ENCODE measurements at regions of chr4 and their contacts with region 1.

Region 1: DNA sequence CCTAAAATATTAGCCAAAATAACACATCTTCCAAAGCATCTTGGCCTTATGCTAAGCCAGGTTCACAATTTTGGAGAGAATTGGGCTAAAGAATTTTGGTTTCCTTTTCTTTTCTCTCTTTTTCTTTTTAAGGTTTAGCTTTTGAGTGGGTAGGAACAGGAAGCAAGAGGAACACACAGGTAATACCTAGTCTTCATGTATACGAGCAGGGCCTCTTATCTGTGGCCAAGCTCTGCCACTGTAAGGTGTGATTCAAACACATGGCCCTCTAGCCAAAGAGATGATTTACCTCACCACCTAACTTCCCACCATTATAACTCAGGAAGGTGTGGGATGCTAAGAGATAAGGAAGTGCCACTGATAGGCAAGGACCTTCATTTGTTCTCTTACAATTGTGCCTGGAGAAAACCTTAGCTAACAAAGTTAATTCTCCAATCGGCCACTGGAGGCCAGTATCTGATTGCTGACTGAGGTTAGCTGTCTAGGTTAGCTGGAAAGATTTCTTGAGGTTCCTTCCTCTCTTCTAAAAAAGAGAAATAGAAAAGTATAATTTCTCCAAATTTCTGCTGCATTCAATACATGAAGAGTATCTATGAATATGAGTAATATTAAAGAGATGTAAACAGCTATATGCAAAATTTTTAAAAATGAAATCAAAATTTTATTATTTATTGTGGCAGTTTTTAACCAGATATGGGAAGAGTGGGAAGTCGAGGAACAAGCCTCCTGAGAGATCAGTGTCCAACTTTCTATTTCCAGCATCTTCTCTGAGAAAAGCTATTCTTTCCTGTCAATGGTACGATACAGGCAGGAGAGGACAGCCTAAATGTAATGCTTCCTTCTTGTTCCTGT is 30.1 kb upstream of the BBS7 start:
- DNase-seq: peak; percentile 24
- H3K4me3 Mint-ChIP-seq: no peak overlapping the region
- H3K27ac Mint-ChIP-seq: no peak overlapping the region
- H3K4me1 Mint-ChIP-seq: peaks cover 6% of the 10 kb centered on the region
- H3K27me3 Mint-ChIP-seq: peaks cover 7% of the 10 kb centered on the region

Region 2: DNA sequence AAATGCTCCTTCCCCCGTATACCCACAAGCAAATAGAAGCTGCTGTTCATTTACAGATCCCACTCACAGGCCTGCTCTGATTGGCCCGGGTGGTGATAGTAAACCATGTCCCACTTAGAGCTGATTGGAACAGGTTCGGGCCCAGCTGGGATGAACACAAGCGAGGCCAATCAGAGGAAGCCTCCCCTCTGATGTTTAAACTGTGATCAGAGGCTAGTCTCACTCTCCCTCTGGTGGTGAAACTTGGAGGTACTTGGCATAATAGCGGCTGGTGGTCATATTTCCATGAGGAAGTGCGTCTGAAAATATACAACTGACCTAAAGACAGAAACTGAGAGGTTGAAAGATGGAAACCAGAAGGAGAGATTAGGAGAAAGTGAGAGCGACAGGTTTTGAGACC is 103.0 kb after region 1 on chr4:
- intact Hi-C with region 1: loop called (anchors 1 kb)
- DNase-seq: no peak
- H3K4me3 Mint-ChIP-seq: no peak overlapping the region
- H3K27ac Mint-ChIP-seq: no peak overlapping the region
- H3K4me1 Mint-ChIP-seq: peaks cover 14% of the 10 kb centered on the region
- H3K27me3 Mint-ChIP-seq: peaks cover 5% of the 10 kb centered on the region

Region 3: DNA sequence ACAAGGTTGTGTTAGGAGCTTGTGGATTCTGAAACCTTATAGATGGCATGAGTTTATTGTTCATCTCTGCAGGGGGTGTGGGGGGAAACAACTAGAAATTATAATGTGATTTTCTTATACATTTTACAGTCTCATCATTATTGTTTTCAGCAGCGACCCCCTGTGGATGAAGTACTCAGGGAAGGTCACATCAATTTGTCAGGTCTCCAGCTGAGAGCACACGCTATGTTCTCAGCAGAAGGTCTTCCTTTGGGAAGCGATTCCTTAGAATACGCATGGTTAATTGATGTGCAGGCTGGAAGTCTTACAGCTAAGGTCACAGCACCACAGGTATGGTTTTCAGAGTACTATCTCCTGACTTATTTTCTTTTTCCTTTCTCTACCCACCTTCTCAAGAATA is 324.0 kb after region 1 on chr4:
- intact Hi-C with region 1: loop called (anchors 5 kb)
- DNase-seq: no peak
- H3K4me3 Mint-ChIP-seq: no peak overlapping the region
- H3K27ac Mint-ChIP-seq: no peak overlapping the region
- H3K4me1 Mint-ChIP-seq: no peaks in the 10 kb centered on the region
- H3K27me3 Mint-ChIP-seq: no peaks in the 10 kb centered on the region

Region 4: GRCh38 chr4:122309988-122310626 is 409.7 kb after region 1 on chr4:
- intact Hi-C with region 1: loop called (anchors 5 kb)
- DNase-seq: no peak
- H3K4me3 Mint-ChIP-seq: no peak overlapping the region
- H3K27ac Mint-ChIP-seq: no peak overlapping the region
- H3K4me1 Mint-ChIP-seq: peaks cover 6% of the 10 kb centered on the region
- H3K27me3 Mint-ChIP-seq: no peaks in the 10 kb centered on the region

Region 5: DNA sequence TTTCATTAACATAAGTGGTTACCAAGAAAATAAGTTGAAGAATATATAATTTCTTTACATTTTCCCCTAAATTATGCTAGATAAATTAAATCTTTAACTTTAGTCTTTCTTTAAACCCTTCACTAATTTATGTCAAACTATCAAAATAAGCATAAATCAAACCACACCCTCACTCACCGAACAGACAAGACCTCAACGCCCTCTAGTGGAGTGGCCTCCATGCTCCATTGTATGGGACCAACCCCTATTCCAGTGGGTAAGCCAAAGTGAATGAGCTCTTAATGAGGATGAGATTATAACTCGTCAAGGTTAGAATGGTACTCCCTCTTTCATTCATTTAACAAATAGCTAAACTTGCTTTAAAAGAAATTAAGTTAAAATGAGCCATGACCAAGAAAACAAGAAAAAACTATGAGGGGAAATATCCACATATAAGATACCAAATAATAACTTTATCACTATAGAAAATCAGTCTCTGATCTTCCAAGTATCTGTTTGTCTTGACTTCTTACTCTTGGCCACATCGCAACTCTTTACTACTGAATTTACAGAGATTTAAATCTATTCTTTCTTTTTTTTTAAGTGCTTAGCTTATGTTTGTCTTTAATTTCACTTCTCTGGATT is 816.6 kb after region 1 on chr4:
- intact Hi-C with region 1: loop called (anchors 2 kb)
- DNase-seq: peak; percentile 55
- H3K4me3 Mint-ChIP-seq: peak overlapping the region; percentile 25
- H3K27ac Mint-ChIP-seq: peak overlapping the region; percentile 81
- H3K4me1 Mint-ChIP-seq: peaks cover 46% of the 10 kb centered on the region
- H3K27me3 Mint-ChIP-seq: peaks cover 2% of the 10 kb centered on the region

Region 6: GRCh38 chr4:122930862-122931261 is 1030.5 kb after region 1 on chr4:
- intact Hi-C with region 1: loop called (anchors 5 kb)
- DNase-seq: no peak
- H3K4me3 Mint-ChIP-seq: no peak overlapping the region
- H3K27ac Mint-ChIP-seq: no peak overlapping the region
- H3K4me1 Mint-ChIP-seq: peaks cover 31% of the 10 kb centered on the region
- H3K27me3 Mint-ChIP-seq: no peaks in the 10 kb centered on the region

Measured in activated T-helper 1 cell treated with anti-CD3 and anti-CD28 coated beads, Interleukin-12 subunit alpha, Interleukin-12 subunit beta, Interleukin-2, Interleukin-4 antibody, amounts not matched to agents 30 ng/mL and 10 ng/mL and 1 ng/mL, durations not matched to agents 14 hours and 24 hours and 36 hours (primary cell).